ENCODE measurements at regions of chr22 and their contacts with region 1.

Region 1: GRCh38 chr22:44523981-44524759 is 26.1 kb upstream of the RTL6 start:
- DNase-seq: no peak
- ATAC-seq: no peak
- H3K4me3 ChIP-seq: no peak overlapping the region
- H3K27ac ChIP-seq: no peak overlapping the region
- H3K4me1 ChIP-seq: no peaks in the 10 kb centered on the region
- H3K27me3 ChIP-seq: peaks cover 4 to 20% (median 6%) of the 10 kb centered on the region in 3 donors
- CTCF ChIP-seq: no peak
- POLR2A ChIP-seq: no peak

Region 2: GRCh38 chr22:44410451-44411061 is 113.6 kb before region 1 on chr22:
- in situ Hi-C with region 1: no loop called
- intact Hi-C with region 1: no loop called
- DNase-seq: no peak
- ATAC-seq: no peak
- H3K4me3 ChIP-seq: no peak overlapping the region
- H3K27ac ChIP-seq: no peak overlapping the region
- H3K4me1 ChIP-seq: no peaks in the 10 kb centered on the region
- H3K27me3 ChIP-seq: no peaks in the 10 kb centered on the region
- CTCF ChIP-seq: no peak
- POLR2A ChIP-seq: no peak

Region 3: DNA sequence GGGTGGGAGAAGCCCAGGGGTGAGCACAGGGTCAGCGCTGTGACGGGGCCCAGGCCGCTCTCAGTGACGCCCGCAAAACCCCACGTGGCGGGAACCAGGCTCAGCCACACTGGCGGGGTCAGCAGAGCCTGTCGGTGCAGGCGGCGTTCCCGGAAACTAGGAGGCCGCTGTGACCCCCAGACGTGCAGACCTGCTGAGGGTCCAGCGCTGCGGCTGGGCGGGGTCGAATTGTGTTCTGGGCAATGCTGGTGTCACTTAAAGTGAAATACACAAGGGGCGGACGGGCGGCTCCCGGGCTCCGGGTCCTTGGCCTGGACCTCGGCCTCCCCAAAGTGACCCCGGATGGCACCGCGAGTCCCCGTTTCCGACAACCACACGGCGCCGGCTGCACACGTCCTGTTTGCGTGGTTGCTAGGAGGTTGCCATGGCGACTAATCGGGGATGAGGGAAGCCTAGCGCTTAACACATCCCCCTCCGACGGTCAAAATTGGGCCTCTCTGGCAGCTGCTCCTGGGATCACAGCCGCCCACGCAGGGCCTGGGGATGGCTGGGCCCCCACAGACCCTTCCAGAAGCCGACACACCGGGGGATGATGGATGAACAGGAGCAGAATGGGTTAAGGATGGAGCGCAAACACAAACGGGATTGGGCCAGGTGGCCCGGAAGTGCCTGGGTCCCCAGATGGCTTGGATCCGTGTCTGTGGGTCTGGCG is 96.1 kb after region 1 on chr22:
- in situ Hi-C with region 1: loop called in 1 of 4 experiments (anchors 25 kb)
- intact Hi-C with region 1: no loop called
- DNase-seq: no peak
- ATAC-seq: no peak
- H3K4me3 ChIP-seq: no peak overlapping the region
- H3K27ac ChIP-seq: no peak overlapping the region
- H3K4me1 ChIP-seq: no peaks in the 10 kb centered on the region
- H3K27me3 ChIP-seq: peaks cover 26 to 40% (median 39%) of the 10 kb centered on the region in 3 donors
- CTCF ChIP-seq: no peak
- POLR2A ChIP-seq: no peak